ENCODE measurements at regions of chr20 and their contacts with region 1.

Region 1: DNA sequence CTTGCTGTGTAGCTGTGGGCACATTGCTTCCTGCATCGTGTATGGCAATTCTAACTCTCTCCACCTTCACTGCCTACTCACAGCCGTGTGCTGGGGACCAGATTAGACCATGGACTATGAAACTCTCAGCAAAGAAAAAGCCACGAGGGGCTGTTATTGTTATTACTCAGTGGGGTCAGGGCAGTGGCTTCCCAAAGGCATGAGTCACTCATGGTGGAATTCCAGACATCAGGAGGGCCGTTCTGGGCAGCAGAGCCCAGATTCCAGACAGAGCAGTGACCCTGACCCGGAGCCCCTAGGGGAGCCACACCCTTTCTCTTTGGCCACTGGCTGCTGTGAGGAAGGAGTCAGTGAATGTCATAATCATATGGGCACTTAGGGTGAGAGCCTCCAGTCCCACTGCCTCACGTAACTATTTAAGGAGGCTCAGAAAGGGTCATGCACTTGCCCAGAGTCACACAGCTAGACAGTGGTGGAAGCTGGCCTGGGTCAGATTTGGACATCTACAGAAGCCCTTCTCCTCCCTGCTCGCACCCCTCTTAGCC is 22.2 kb upstream of the CCN5 start:
- DNase-seq: peak; percentile 92 to 96
- ATAC-seq: peak; percentile 93 to 95
- H3K4me3 ChIP-seq: no peak overlapping the region
- H3K27ac ChIP-seq: peak overlapping the region; percentile 86 to 89
- H3K4me1 ChIP-seq: peaks cover 41% of the 10 kb centered on the region
- CTCF ChIP-seq: 0 out of 3 replicates have a peak, but pooled peaks have one; percentile 8
- EP300 ChIP-seq: peak; percentile 86 to 95; a peak in 4 of 5 replicates
- POLR2A ChIP-seq: no peak
- RAD21 ChIP-seq: peak; percentile 37 to 58

Region 2: DNA sequence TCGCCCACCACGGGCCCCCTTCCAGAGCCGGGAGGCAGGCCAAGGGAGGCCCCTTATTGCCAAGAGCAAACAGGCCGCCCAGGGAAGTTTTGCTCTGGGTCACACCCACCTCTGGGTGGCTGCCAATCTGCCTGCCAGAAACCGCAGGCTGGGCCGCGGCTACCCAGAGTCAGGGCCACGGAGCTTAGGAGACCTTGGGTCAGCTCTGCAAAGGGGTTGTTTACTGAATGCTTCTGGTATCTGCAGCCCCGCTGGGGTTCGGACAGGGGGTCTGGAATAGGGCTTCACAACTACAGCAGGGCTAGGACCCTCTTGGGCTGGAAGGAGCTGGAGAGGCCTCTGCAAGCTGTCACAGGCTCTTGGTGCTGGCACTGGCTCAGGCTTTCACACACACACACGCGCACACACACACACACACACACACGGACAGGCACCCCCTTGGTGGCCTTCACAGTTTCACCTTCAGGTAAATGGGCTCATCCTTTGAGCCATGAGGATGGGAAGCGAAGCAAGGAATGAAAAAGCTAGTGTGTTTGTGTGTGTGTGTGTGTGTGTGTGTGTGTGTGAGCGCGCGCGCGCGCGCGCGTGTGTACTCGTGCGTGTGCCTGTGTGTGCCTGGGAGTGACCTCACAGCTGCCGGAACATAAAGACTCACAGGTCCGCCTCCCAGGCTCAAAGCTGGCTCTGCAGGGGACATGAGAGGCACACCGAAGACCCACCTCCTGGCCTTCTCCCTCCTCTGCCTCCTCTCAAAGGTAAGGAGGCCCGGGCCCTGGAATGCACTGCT is 21.9 kb after region 1 on chr20 and contains the start of gene CCN5:
- CTCF ChIA-PET with region 1: interaction called, 525 read pairs
- POLR2A ChIA-PET with region 1: interaction called, 4 read pairs
- DNase-seq: peak; percentile 79 to 80
- ATAC-seq: peak; percentile 75 to 82
- H3K4me3 ChIP-seq: peak within 1 kb of the TSS; percentile 20; the same call in 1 of the 3 replicates
- H3K27ac ChIP-seq: peak within 1 kb of the TSS; percentile 96 to 98
- H3K4me1 ChIP-seq: peaks cover 69% of the 10 kb centered on the region
- CTCF ChIP-seq: no peak
- EP300 ChIP-seq: 0 out of 5 replicates have a peak, but pooled peaks of 1 of the 2 experiments have one; percentile 8
- POLR2A ChIP-seq: no peak
- RAD21 ChIP-seq: no peak
- polyA plus RNA-seq, gene CCN5: 9.9 and 10.1 TPM in 2 replicates

Region 3: GRCh38 chr20:44720617-44720993 is 27.6 kb after region 1 on chr20:
- CTCF ChIA-PET with region 1: interaction called, 525 read pairs
- POLR2A ChIA-PET with region 1: interaction called, 14 read pairs
- DNase-seq: peak; percentile 96 to 97
- ATAC-seq: peak; percentile 94 to 95
- H3K4me3 ChIP-seq: no peak overlapping the region
- H3K27ac ChIP-seq: peak overlapping the region; percentile 96 to 98
- H3K4me1 ChIP-seq: peaks cover 86% of the 10 kb centered on the region
- CTCF ChIP-seq: no peak
- EP300 ChIP-seq: no peak; a peak in 1 of 5 replicates
- POLR2A ChIP-seq: no peak
- RAD21 ChIP-seq: no peak; a peak in 1 of 5 replicates

Region 4: GRCh38 chr20:44756011-44756688 is 63.1 kb after region 1 on chr20:
- CTCF ChIA-PET with region 1: no interaction called
- POLR2A ChIA-PET with region 1: no interaction called
- DNase-seq: no peak
- ATAC-seq: peak in 1 of 2 experiments; percentile 51; a peak in 3 of 6 replicates
- H3K4me3 ChIP-seq: no peak overlapping the region
- H3K27ac ChIP-seq: no peak overlapping the region
- H3K4me1 ChIP-seq: no peaks in the 10 kb centered on the region
- CTCF ChIP-seq: no peak
- EP300 ChIP-seq: no peak
- POLR2A ChIP-seq: no peak
- RAD21 ChIP-seq: no peak

Measured in A549 (cell line).